HepG2 (cell line): ENCODE measurements at regions of chr6 and their contacts with region 1.

Region 1: DNA sequence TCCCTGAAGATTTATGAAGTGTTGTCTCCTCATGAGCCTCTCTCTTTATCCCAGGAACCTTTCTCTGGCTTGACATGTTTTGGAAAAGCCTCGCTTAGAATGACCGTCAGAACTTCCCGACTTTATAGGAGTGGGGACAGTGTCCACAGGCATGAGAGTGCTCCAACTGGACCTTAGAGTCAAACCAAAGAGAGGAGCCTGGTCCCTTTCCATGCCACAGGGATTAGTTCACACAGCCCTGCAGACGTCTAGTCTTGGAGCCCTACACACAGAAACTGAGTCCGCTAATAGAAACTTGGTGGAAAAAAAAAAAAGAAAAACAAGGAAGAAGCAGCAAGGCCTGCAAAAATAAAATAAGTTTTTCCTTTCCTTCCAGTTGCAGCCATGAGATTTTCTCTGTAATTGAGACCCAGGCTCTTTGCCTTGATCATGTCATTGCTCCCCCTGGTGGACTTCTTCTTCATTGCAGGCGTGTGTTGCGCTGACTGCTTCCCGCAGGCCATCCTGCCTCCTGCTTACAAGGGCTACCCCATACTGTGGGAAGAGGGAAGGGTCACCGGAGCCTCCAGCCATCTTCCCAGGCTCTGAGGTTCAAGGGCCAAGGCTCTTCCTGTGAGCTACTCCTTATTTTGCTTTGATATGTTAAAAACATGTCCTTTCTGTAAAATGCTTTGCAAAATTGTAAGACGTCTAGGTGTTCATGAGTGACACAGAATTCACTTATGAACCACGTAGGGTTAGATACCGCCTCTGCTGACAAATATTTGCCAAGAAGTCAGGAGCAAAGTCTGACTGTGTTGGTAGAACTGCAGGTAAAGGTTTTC is 201.0 kb downstream of the UST start:
- DNase-seq: peak; percentile 74
- ATAC-seq: peak; percentile 99
- H3K4me3 ChIP-seq: no peak overlapping the region
- H3K27ac ChIP-seq: no peak overlapping the region
- H3K4me1 ChIP-seq: peaks cover 8% of the 10 kb centered on the region
- H3K27me3 ChIP-seq: peaks cover 0 to 11% of the 10 kb centered on the region in 2 experiments; a peak in 1 of 5 replicates
- CTCF ChIP-seq: peak; percentile 93
- EP300 ChIP-seq: 0 out of 4 replicates have a peak, but pooled peaks of 1 of the 2 experiments have one; percentile 12
- POLR2A ChIP-seq: no peak
- RAD21 ChIP-seq: peak; percentile 71

Region 2: DNA sequence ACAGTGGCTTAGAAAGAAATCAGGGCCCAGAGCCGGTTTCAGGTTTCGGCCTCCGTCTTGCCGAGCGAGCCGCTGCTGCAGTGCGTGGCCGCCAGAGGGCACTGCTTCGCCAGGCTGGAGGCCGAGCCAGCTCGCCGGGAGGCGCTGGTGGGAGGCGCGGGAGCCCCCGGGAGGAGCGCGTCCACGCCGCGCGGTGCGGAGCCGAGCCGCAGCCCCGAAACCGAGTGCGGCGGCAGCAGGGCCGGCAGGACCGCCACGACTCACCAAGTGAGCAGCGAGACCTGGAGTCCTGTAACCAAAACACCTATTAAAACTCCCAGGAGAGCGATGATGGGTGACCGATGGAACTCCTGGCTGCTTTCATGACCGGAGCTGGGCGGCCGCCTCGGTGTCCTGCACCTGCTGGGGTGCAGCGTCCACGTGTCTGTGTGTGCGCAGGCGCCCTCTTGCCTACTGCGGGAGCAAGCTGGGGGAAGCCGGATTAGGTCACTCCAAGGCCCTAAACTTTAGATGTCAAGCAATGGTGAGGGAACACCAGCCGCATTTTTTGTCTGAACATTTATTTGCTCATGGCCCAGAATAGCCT is 387.9 kb before region 1 on chr6:
- CTCF ChIA-PET with region 1: interaction called, 28 read pairs
- POLR2A ChIA-PET with region 1: no interaction called
- in situ Hi-C with region 1: no loop called
- intact Hi-C with region 1: loop called (anchors 1 kb)
- DNase-seq: peak; percentile 39
- ATAC-seq: peak; percentile 91
- H3K4me3 ChIP-seq: peak overlapping the region; percentile 42 to 67 (median 45)
- H3K27ac ChIP-seq: no peak overlapping the region
- H3K4me1 ChIP-seq: peaks cover 24% of the 10 kb centered on the region
- H3K27me3 ChIP-seq: peaks cover 5 to 37% of the 10 kb centered on the region in 2 experiments; a peak in 4 of 5 replicates
- CTCF ChIP-seq: peak; percentile 93
- EP300 ChIP-seq: no peak
- POLR2A ChIP-seq: no peak
- RAD21 ChIP-seq: peak; percentile 96

Region 3: GRCh38 chr6:148578245-148578732 is 369.5 kb before region 1 on chr6:
- CTCF ChIA-PET with region 1: interaction called, 31 read pairs
- POLR2A ChIA-PET with region 1: no interaction called
- in situ Hi-C with region 1: loop called (anchors 5 kb)
- intact Hi-C with region 1: loop called (anchors 1 kb)
- DNase-seq: peak; percentile 66
- ATAC-seq: peak; percentile 100
- H3K4me3 ChIP-seq: no peak overlapping the region
- H3K27ac ChIP-seq: no peak overlapping the region
- H3K4me1 ChIP-seq: no peaks in the 10 kb centered on the region
- H3K27me3 ChIP-seq: peaks cover 0 to 3% of the 10 kb centered on the region in 2 experiments; a peak in 2 of 5 replicates
- CTCF ChIP-seq: peak; percentile 93
- EP300 ChIP-seq: no peak
- POLR2A ChIP-seq: no peak
- RAD21 ChIP-seq: peak; percentile 93

Region 4: DNA sequence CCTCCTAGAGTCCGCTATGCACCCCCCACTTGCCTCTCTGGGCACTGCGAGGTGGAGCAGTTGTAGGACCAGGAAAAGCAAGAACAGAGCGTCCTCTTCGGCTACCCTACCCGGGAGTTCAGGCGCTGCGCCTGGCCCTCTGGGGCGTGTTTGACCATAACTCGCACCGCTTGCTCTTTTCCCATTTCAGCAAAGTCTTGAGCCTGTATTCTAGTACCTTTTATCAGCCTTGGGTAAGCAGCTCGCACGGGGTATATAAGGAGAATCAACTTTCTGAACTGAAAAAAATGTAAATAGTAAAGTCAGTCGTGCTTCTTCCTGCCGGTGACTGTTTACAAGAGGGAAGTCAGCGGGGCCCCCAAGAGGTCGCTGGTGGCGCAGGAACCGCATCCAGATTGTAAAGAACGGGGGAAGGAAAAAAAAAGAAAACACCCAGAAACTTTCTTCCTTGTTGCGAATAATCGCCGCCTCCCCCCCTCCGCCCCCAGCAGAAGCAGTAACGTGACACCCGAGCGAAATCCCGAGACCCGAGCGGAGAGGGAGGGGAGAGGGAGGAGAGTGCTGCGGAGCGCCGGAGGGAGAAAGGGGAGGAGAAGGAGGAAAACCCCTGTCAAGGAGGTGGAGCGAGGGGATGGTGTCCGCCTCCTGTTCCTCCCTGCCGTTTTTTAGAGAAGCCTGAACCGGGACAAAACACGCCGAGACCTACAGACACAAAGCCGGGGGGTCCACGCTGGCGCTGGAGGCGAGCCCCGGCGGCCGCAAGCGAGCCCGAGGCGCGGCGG is 201.3 kb before region 1 on chr6 and contains the start of gene UST:
- CTCF ChIA-PET with region 1: no interaction called
- POLR2A ChIA-PET with region 1: no interaction called
- in situ Hi-C with region 1: loop called (anchors 10 kb)
- intact Hi-C with region 1: loop called (anchors 2 kb)
- DNase-seq: no peak
- ATAC-seq: peak; percentile 66
- H3K4me3 ChIP-seq: peak within 1 kb of the TSS; percentile 30 to 67 (median 40); a peak in 5 of 6 replicates
- H3K27ac ChIP-seq: no peak within 1 kb of the TSS
- H3K4me1 ChIP-seq: no peaks in the 10 kb centered on the region
- H3K27me3 ChIP-seq: peaks cover 16 to 68% of the 10 kb centered on the region in 2 experiments
- CTCF ChIP-seq: peak; percentile 37; the same call in 1 of the 2 replicates
- EP300 ChIP-seq: no peak
- POLR2A ChIP-seq: no peak
- RAD21 ChIP-seq: no peak
- total RNA-seq, gene UST: 0.27 and 0.70 TPM in 2 replicates

Region 5: DNA sequence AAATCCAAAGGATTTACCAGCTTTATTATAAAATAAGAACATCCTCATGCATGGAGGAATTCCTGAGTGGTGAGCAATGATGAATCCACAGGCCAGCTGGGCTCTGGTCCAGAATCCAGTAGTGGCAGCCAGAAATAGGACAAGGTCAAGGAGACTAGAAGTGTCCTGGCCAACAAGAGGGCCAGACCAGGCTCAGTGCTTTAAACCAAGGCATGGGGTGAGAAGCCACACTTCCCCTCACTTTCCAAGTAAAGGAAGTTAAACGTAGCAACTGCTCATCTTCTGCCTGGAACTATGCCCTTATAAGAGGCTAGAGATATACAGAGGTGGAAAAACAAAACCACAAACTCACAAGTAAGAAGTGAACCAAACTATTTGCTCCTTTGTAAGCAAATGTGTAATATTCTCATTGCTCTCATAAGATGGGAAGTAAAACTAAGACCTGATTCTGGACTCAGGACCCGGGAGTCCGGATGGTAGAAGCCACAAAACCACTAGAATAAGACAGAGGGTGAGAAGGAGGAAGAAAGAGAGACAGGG is 52.2 kb after region 1 on chr6:
- CTCF ChIA-PET with region 1: no interaction called
- POLR2A ChIA-PET with region 1: no interaction called
- in situ Hi-C with region 1: no loop called
- intact Hi-C with region 1: no loop called
- DNase-seq: no peak
- ATAC-seq: no peak
- H3K4me3 ChIP-seq: no peak overlapping the region
- H3K27ac ChIP-seq: no peak overlapping the region
- H3K4me1 ChIP-seq: peaks cover 9% of the 10 kb centered on the region
- H3K27me3 ChIP-seq: no peaks in the 10 kb centered on the region; a peak in 1 of 5 replicates
- CTCF ChIP-seq: no peak
- EP300 ChIP-seq: no peak
- POLR2A ChIP-seq: no peak
- RAD21 ChIP-seq: no peak